ENCODE measurements at regions of chr3 and their contacts with region 1.

Region 1: DNA sequence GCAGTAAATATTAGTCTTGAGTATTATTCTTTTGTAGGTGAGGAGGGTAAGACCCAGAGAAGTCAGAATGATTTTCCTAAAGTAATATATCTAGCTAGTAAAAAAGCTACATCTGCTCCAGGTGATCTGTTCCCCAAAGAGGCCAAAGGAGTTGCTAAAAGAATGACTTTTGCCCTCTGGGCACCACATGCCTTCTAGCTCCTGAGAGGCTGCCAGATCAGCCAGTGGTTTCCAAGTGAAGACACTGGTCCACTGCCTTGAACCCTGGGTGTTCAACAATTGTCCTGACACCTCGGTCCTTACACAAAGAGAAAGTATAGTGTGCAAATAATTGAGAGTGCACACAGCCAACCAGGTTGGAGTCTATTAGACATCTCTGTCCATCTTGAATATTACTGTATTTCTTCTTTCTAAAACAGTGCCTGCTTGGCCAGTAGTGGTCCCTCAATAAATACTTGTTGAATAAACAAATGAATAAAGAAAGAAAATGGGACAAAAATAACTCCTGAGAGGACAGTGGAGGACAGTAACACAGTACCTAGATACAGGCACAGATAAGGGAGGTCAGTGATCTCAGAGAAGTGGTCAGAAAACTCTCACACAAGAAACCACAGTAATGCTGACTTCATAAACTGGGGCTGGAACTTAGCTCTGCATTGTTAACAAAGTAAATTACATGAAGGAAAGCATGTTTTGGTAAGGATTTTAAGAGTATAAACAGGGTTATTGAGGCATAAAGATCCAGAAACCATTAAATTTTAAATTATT is 56.6 kb upstream of the CSTA start:
- DNase-seq: no peak
- ATAC-seq: no peak
- H3K4me3 ChIP-seq: no peak overlapping the region
- H3K27ac ChIP-seq: no peak overlapping the region
- H3K4me1 ChIP-seq: no peaks in the 10 kb centered on the region
- H3K27me3 ChIP-seq: peaks cover 7% of the 10 kb centered on the region
- CTCF ChIP-seq: no peak
- POLR2A ChIP-seq: no peak
- RAD21 ChIP-seq: no peak

Region 2: DNA sequence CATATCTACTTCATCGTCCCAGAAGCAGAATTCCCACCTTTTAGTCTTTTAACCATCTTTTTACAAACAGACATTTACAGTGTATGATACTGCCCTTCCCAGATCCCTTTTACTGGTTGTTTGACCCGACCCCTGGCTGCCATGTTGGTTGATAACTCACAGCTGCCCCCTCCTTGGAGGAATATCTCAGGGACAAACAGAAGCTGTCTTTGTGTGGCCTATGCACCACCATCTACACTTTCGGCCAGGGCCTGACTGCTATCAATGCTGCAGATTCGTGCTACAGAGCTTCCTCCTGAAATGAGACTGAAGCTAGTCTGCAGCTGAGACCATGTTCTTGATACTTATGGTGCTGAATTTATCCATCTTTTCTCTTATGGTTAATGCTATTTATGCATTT is 716.1 kb before region 1 on chr3:
- CTCF ChIA-PET with region 1: no interaction called
- POLR2A ChIA-PET with region 1: no interaction called
- dilution Hi-C with region 1: no loop called
- in situ Hi-C with region 1: loop called (anchors 10 kb)
- intact Hi-C with region 1: no loop called
- DNase-seq: no peak
- ATAC-seq: peak; percentile 42; the same call in 1 of the 2 replicates
- H3K4me3 ChIP-seq: peak overlapping the region; percentile 9; the same call in 1 of the 2 replicates
- H3K27ac ChIP-seq: no peak overlapping the region
- H3K4me1 ChIP-seq: no peaks in the 10 kb centered on the region; the same call in 1 of the 2 replicates
- H3K27me3 ChIP-seq: no peaks in the 10 kb centered on the region
- CTCF ChIP-seq: no peak
- POLR2A ChIP-seq: no peak
- RAD21 ChIP-seq: no peak

Region 3: GRCh38 chr3:122890077-122890719 is 621.8 kb after region 1 on chr3:
- CTCF ChIA-PET with region 1: no interaction called
- POLR2A ChIA-PET with region 1: no interaction called
- dilution Hi-C with region 1: no loop called
- in situ Hi-C with region 1: no loop called
- intact Hi-C with region 1: no loop called
- DNase-seq: peak; percentile 42
- ATAC-seq: peak; percentile 81
- H3K4me3 ChIP-seq: no peak overlapping the region
- H3K27ac ChIP-seq: no peak overlapping the region
- H3K4me1 ChIP-seq: no peaks in the 10 kb centered on the region; the same call in 1 of the 2 replicates
- H3K27me3 ChIP-seq: peaks cover 12% of the 10 kb centered on the region
- CTCF ChIP-seq: no peak
- POLR2A ChIP-seq: no peak
- RAD21 ChIP-seq: no peak